Endothelial cell of umbilical vein (primary cell): ENCODE measurements at regions of chr14 and their contacts with region 1.

Region 1: DNA sequence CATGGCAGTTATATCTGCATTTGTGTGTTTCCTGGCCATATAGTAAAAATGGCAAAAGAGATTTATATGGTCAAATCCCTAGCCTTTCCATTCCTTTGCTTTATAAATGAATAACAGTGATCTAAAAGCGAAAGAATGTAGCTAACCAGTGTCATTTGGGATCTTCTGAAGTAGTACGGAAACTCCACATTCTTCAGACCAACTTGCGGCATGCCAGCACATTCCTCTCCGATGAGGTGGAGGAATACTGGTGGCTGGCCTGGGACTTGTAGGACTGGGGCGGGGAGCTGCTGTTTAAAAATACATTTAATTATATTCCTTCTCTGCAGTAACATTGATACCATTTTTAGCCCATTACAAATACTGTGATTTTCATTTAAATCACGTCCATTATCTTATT is 85.3 kb downstream of the SAMD4A start:
- DNase-seq: peak; percentile 96
- H3K4me3 ChIP-seq: peak overlapping the region; percentile 29 to 80 (median 30)
- H3K27ac ChIP-seq: peak overlapping the region; percentile 100
- H3K4me1 ChIP-seq: peaks cover 62% of the 10 kb centered on the region
- H3K27me3 ChIP-seq: no peaks in the 10 kb centered on the region
- CTCF ChIP-seq: no peak
- POLR2A ChIP-seq: no peak

Region 2: DNA sequence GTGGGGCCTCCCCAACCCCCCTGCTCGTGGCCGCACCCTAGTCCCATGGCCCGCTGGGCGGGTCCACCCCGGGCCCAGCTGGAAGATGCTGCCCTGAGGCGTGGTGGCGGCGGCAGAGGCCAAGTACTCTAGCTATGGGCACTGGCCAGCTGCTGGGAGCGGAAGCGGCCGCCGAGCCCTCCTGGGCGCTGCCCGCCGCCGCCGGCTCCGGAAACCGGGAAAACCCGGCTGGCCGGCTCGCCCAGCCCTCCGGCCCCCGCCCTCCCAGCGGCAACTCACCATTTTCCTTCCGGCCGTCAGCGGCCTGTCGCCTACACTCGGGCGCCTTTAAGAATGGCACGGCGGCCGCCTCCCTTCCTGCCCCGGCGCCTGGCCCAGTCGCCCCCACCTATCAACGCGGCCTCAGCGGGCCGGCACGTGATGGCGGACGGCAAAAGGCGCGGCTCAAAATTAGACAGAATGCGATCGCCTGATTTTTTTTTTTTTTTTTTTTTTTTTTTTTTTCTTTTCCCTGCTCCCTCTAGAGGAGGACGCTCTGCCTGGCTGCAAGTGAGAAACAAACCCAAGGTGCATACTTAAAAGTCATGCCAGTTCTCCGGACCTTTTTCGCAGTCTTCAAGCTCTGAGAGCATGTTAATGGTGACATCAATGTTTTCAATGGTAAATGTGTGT is 163.4 kb before region 1 on chr14 and contains the start of gene GMFB:
- CTCF ChIA-PET with region 1: no interaction called
- POLR2A ChIA-PET with region 1: interaction called, 3 read pairs
- dilution Hi-C with region 1: no loop called
- intact Hi-C with region 1: loop called (anchors 1 kb)
- DNase-seq: peak; percentile 95
- H3K4me3 ChIP-seq: peak within 1 kb of the TSS; percentile 72 to 91 (median 81)
- H3K27ac ChIP-seq: peak within 1 kb of the TSS; percentile 97
- H3K4me1 ChIP-seq: peaks cover 13% of the 10 kb centered on the region
- H3K27me3 ChIP-seq: no peaks in the 10 kb centered on the region
- CTCF ChIP-seq: peak; percentile 28 to 58
- POLR2A ChIP-seq: peak; percentile 95
- total RNA-seq, gene GMFB: 35.5 and 52.0 TPM in 2 replicates

Region 3: GRCh38 chr14:54512393-54512792 is 139.8 kb before region 1 on chr14:
- CTCF ChIA-PET with region 1: no interaction called
- POLR2A ChIA-PET with region 1: no interaction called
- dilution Hi-C with region 1: no loop called
- intact Hi-C with region 1: no loop called
- DNase-seq: peak; percentile 7
- H3K4me3 ChIP-seq: no peak overlapping the region
- H3K27ac ChIP-seq: no peak overlapping the region
- H3K4me1 ChIP-seq: peaks cover 9% of the 10 kb centered on the region
- H3K27me3 ChIP-seq: no peaks in the 10 kb centered on the region
- CTCF ChIP-seq: no peak
- POLR2A ChIP-seq: no peak

Region 4: DNA sequence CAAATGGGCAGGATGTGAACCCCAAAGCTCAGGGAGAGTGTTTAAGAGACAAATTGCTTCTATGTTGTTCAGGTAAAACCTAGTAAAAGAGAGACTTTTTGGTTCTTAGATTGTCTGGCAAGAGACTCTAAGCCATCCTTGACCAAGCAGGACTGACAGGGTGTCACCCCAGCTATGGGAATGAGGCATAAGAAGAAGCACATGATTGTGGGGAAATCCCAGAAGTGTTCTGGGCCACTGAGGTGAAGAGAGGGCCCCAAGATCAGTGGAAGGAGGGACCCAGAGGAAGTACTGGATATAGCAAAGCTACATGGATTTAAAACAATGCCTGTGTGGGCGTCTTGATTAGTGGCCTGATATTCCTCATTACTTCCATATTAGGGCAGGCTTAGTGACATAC is 13.8 kb after region 1 on chr14:
- CTCF ChIA-PET with region 1: interaction called, 10 read pairs
- POLR2A ChIA-PET with region 1: interaction called, 5 read pairs
- dilution Hi-C with region 1: no loop called
- intact Hi-C with region 1: no loop called
- DNase-seq: no peak
- H3K4me3 ChIP-seq: no peak overlapping the region
- H3K27ac ChIP-seq: peak overlapping the region; percentile 5
- H3K4me1 ChIP-seq: peaks cover 31% of the 10 kb centered on the region
- H3K27me3 ChIP-seq: no peaks in the 10 kb centered on the region
- CTCF ChIP-seq: no peak
- POLR2A ChIP-seq: no peak

Region 5: GRCh38 chr14:54683882-54684794 is 31.9 kb after region 1 on chr14:
- CTCF ChIA-PET with region 1: interaction called, 30 read pairs
- POLR2A ChIA-PET with region 1: interaction called, 29 read pairs
- dilution Hi-C with region 1: no loop called
- intact Hi-C with region 1: loop called (anchors 1 kb)
- DNase-seq: peak; percentile 81
- H3K4me3 ChIP-seq: no peak overlapping the region
- H3K27ac ChIP-seq: peak overlapping the region; percentile 95
- H3K4me1 ChIP-seq: peaks cover 61% of the 10 kb centered on the region
- H3K27me3 ChIP-seq: no peaks in the 10 kb centered on the region
- CTCF ChIP-seq: no peak
- POLR2A ChIP-seq: no peak

Region 6: GRCh38 chr14:54709444-54709843 is 57.3 kb after region 1 on chr14:
- CTCF ChIA-PET with region 1: no interaction called
- POLR2A ChIA-PET with region 1: no interaction called
- dilution Hi-C with region 1: no loop called
- intact Hi-C with region 1: no loop called
- DNase-seq: no peak
- H3K4me3 ChIP-seq: no peak overlapping the region
- H3K27ac ChIP-seq: no peak overlapping the region
- H3K4me1 ChIP-seq: peaks cover 16% of the 10 kb centered on the region
- H3K27me3 ChIP-seq: no peaks in the 10 kb centered on the region
- CTCF ChIP-seq: no peak
- POLR2A ChIP-seq: no peak

Region 7: DNA sequence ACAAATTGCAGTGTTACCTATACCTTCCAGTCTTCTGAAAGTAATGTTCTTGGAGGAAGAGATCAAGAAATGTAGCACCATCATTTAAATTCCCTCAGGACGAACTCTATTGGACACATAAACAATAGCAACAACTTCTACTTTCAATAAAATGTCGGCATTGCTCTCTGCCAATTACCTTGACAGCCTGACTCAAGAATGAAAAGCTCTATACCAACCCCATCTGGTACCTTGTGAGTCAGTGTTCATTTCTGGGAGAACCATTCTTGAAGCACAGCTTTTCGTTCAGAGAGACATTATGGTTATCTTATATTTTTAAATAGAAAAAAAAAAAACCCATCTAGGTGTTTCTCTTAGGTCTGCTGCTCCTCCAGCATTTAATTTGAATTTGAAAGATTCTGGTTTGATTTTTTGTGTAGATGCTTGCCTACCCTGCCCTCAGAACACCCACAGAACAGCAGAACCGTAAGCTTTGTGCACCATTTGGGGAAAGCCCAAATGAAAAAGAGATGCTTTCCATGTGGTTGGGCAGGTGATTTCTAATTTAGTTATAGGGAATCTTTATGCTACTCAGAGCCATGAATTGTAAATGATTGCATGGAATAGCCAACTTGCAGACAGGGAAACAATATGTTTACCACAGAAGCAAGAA is 70.7 kb after region 1 on chr14:
- CTCF ChIA-PET with region 1: interaction called, 7 read pairs
- POLR2A ChIA-PET with region 1: no interaction called
- dilution Hi-C with region 1: no loop called
- intact Hi-C with region 1: loop called (anchors 2 kb)
- DNase-seq: peak; percentile 47
- H3K4me3 ChIP-seq: no peak overlapping the region
- H3K27ac ChIP-seq: no peak overlapping the region
- H3K4me1 ChIP-seq: peaks cover 6% of the 10 kb centered on the region
- H3K27me3 ChIP-seq: no peaks in the 10 kb centered on the region
- CTCF ChIP-seq: peak; percentile 24 to 30
- POLR2A ChIP-seq: no peak